ENCODE measurements at regions of chr9 and their contacts with region 1.

Region 1: DNA sequence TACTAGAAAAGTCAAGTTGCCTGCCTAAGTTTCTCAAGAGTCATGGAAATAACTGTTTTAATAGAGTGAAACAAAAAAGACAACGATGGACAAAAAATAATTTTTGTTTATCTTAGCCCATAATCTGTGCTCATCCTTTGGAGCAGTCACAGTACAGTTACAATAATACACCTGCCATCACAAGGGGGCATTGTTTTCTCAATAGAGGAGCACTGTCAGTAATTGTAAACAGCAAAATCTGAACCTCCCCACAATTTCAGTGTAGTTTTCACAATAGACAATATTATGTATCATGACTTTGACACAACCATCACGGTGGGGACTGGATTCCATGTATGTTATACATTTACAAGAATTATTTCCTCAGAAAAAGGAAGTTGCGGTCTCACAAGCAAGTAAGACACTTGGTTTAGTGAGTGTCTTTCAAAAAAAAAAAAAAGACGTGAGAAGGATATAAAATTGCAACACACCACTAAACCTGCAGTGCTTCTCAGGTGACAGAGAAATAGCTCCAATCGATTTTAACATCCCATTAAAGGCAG is 586.3 kb downstream of the PTPRD start:
- DNase-seq: no peak
- H3K4me3 ChIP-seq: no peak overlapping the region
- H3K27ac ChIP-seq: no peak overlapping the region
- H3K4me1 ChIP-seq: no peaks in the 10 kb centered on the region
- H3K27me3 ChIP-seq: no peaks in the 10 kb centered on the region
- CTCF ChIP-seq: no peak
- POLR2A ChIP-seq: no peak

Region 2: DNA sequence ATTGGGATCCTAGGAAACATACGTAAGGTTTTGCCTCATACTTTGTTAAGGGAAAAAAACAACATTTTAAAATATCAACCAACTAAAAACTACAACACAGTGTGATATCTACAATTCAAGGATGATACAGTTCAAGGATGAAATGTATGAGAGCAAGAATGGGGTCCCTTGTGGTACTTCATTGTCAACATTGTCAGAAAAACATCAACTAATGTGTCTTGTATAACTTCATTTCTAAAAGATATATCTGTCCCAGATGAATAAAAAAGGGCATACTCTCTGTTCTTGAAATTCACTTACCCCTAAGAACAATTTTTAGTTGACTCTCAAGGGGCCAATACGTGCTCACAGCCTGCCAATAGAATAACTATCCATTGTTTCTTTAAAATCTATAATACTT is 664.2 kb before region 1 on chr9:
- intact Hi-C with region 1: no loop called
- DNase-seq: no peak
- H3K4me3 ChIP-seq: no peak overlapping the region
- H3K27ac ChIP-seq: no peak overlapping the region
- H3K4me1 ChIP-seq: no peaks in the 10 kb centered on the region
- H3K27me3 ChIP-seq: no peaks in the 10 kb centered on the region
- CTCF ChIP-seq: no peak
- POLR2A ChIP-seq: no peak

Region 3: GRCh38 chr9:10274988-10275387 is 248.5 kb after region 1 on chr9:
- intact Hi-C with region 1: loop called (anchors 10 kb)
- DNase-seq: no peak
- H3K4me3 ChIP-seq: no peak overlapping the region
- H3K27ac ChIP-seq: no peak overlapping the region
- H3K4me1 ChIP-seq: no peaks in the 10 kb centered on the region
- H3K27me3 ChIP-seq: no peaks in the 10 kb centered on the region
- CTCF ChIP-seq: no peak
- POLR2A ChIP-seq: no peak